ENCODE measurements at regions of chr2 and their contacts with region 1.

Region 1: GRCh38 chr2:197255543-197255942 is 55.0 kb downstream of the ANKRD44 start:
- DNase-seq: peak; percentile 91
- ATAC-seq: peak; percentile 97
- H3K4me3 ChIP-seq: peak overlapping the region; percentile 18 to 84 (median 49)
- H3K4me3 Mint-ChIP-seq: peak overlapping the region; percentile 87
- H3K27ac ChIP-seq: peak overlapping the region; percentile 90 to 93
- H3K27ac Mint-ChIP-seq: peak overlapping the region; percentile 90
- H3K4me1 ChIP-seq: peaks cover 69 to 74% of the 10 kb centered on the region in 2 donors
- H3K4me1 Mint-ChIP-seq: peaks cover 74% of the 10 kb centered on the region
- H3K27me3 ChIP-seq: no peaks in the 10 kb centered on the region
- H3K27me3 Mint-ChIP-seq: no peaks in the 10 kb centered on the region
- CTCF ChIP-seq: no peak

Region 2: GRCh38 chr2:197198890-197199289 is 56.7 kb before region 1 on chr2:
- CTCF ChIA-PET with region 1: interaction called, 8 read pairs
- POLR2A ChIA-PET with region 1: interaction called, 8 read pairs
- intact Hi-C with region 1: loop called (anchors 2 kb)
- DNase-seq: peak; percentile 93
- ATAC-seq: peak; percentile 96
- H3K4me3 ChIP-seq: peak overlapping the region; percentile 30 to 60 (median 57)
- H3K4me3 Mint-ChIP-seq: peak overlapping the region; percentile 93
- H3K27ac ChIP-seq: peak overlapping the region; percentile 68 to 86
- H3K27ac Mint-ChIP-seq: peak overlapping the region; percentile 97
- H3K4me1 ChIP-seq: peaks cover 68 to 71% of the 10 kb centered on the region in 2 donors
- H3K4me1 Mint-ChIP-seq: peaks cover 84% of the 10 kb centered on the region
- H3K27me3 ChIP-seq: no peaks in the 10 kb centered on the region
- H3K27me3 Mint-ChIP-seq: no peaks in the 10 kb centered on the region
- CTCF ChIP-seq: no peak

Region 3: GRCh38 chr2:197216361-197216979 is 39.1 kb before region 1 on chr2:
- CTCF ChIA-PET with region 1: interaction called, 4 read pairs
- POLR2A ChIA-PET with region 1: no interaction called
- intact Hi-C with region 1: loop called (anchors 2 kb)
- DNase-seq: peak; percentile 76
- ATAC-seq: peak; percentile 70
- H3K4me3 ChIP-seq: peak overlapping the region in 1 of 5 experiments; percentile 15
- H3K4me3 Mint-ChIP-seq: peak overlapping the region; percentile 75
- H3K27ac ChIP-seq: peak overlapping the region; percentile 68 to 95
- H3K27ac Mint-ChIP-seq: peak overlapping the region; percentile 92
- H3K4me1 ChIP-seq: peaks cover 82 to 89% of the 10 kb centered on the region in 2 donors
- H3K4me1 Mint-ChIP-seq: peaks cover 83% of the 10 kb centered on the region
- H3K27me3 ChIP-seq: no peaks in the 10 kb centered on the region
- H3K27me3 Mint-ChIP-seq: no peaks in the 10 kb centered on the region
- CTCF ChIP-seq: no peak

Region 4: GRCh38 chr2:197240421-197241041 is 15.0 kb before region 1 on chr2:
- CTCF ChIA-PET with region 1: interaction called, 7 read pairs
- POLR2A ChIA-PET with region 1: interaction called, 6 read pairs
- intact Hi-C with region 1: loop called (anchors 2 kb)
- DNase-seq: peak; percentile 44
- ATAC-seq: peak; percentile 56
- H3K4me3 ChIP-seq: peak overlapping the region in 1 of 5 experiments; percentile 24
- H3K4me3 Mint-ChIP-seq: peak overlapping the region; percentile 57
- H3K27ac ChIP-seq: peak overlapping the region; percentile 31 to 80
- H3K27ac Mint-ChIP-seq: peak overlapping the region; percentile 90
- H3K4me1 ChIP-seq: peaks cover 71 to 82% of the 10 kb centered on the region in 2 donors
- H3K4me1 Mint-ChIP-seq: peaks cover 83% of the 10 kb centered on the region
- H3K27me3 ChIP-seq: no peaks in the 10 kb centered on the region
- H3K27me3 Mint-ChIP-seq: no peaks in the 10 kb centered on the region
- CTCF ChIP-seq: no peak

Region 5: DNA sequence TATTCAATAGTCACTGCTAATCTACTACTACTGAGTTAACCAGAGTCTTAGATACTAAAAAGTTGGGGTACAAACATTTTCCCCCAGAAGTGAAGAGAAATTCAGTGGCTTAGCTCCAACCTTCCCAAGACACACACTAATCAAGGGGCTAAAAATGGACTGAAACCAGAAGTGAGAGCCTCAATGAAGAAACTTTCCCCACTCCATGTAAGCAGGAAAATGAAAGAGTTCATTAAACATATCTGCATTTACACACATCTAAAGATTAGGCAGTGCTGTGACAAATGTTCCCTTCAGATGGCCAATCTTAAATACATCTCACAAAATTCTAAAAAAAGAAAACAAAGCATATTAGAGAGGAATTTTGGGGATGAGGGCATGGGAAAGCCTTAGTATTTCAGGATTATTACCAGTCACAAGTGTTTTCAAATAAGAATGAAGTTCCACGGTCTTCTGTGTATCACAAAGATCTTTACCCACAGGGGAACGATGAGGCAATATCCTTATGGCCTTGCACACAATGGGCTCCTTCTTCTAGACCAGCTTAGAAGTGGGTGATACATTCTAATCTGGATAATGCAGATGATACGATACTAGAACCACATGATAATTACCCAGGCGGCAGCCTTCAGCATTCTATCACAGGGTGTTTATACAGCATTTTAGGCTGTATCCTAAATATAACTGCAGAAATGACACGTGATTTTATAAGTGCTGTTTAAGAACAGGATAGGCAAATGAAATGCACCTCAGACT is 37.9 kb after region 1 on chr2:
- CTCF ChIA-PET with region 1: interaction called, 5 read pairs
- POLR2A ChIA-PET with region 1: interaction called, 3 read pairs
- intact Hi-C with region 1: loop called (anchors 2 kb)
- DNase-seq: peak; percentile 29
- ATAC-seq: peak; percentile 31
- H3K4me3 ChIP-seq: peak overlapping the region; percentile 14 to 69 (median 50)
- H3K4me3 Mint-ChIP-seq: peak overlapping the region; percentile 86
- H3K27ac ChIP-seq: peak overlapping the region; percentile 69 to 86
- H3K27ac Mint-ChIP-seq: peak overlapping the region; percentile 84
- H3K4me1 ChIP-seq: peaks cover 72 to 88% of the 10 kb centered on the region in 2 donors
- H3K4me1 Mint-ChIP-seq: peaks cover 81% of the 10 kb centered on the region
- H3K27me3 ChIP-seq: no peaks in the 10 kb centered on the region
- H3K27me3 Mint-ChIP-seq: no peaks in the 10 kb centered on the region
- CTCF ChIP-seq: no peak

Measured in B cell (primary cell).